ENCODE measurements at regions of chr7 and their contacts with region 1.

Region 1: GRCh38 chr7:82210416-82211184 is 233.0 kb downstream of the CACNA2D1 start:
- DNase-seq: no peak
- ATAC-seq: no peak
- H3K4me3 ChIP-seq: no peak overlapping the region
- H3K27ac ChIP-seq: no peak overlapping the region
- H3K4me1 ChIP-seq: no peaks in the 10 kb centered on the region
- H3K27me3 ChIP-seq: no peaks in the 10 kb centered on the region
- CTCF ChIP-seq: no peak
- EP300 ChIP-seq: no peak
- POLR2A ChIP-seq: no peak
- RAD21 ChIP-seq: no peak

Region 2: GRCh38 chr7:82194016-82194643 is 16.5 kb before region 1 on chr7:
- CTCF ChIA-PET with region 1: no interaction called
- POLR2A ChIA-PET with region 1: no interaction called
- in situ Hi-C with region 1: no loop called
- intact Hi-C with region 1: no loop called
- DNase-seq: no peak
- ATAC-seq: no peak
- H3K4me3 ChIP-seq: no peak overlapping the region
- H3K27ac ChIP-seq: no peak overlapping the region
- H3K4me1 ChIP-seq: no peaks in the 10 kb centered on the region
- H3K27me3 ChIP-seq: no peaks in the 10 kb centered on the region
- CTCF ChIP-seq: no peak
- EP300 ChIP-seq: no peak
- POLR2A ChIP-seq: no peak
- RAD21 ChIP-seq: no peak

Region 3: DNA sequence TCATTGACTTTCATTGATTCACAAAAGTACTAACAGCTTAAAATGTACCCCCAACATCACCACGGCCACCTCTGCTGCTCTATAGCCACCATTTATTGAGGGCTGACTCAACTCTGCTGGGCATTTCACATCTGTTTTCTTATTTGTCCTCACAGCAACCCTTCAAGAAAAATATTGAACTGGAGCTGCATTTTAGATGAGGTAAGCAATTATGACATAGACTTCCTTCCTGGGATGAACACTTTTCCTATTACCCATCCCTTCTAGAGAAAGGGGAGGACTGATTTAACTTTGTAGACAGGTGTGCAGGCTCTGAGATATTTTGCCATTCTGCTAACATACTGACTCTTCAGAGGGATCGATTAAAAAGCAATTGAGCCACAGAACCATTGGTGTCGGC is 15.6 kb after region 1 on chr7:
- CTCF ChIA-PET with region 1: no interaction called
- POLR2A ChIA-PET with region 1: no interaction called
- in situ Hi-C with region 1: no loop called
- intact Hi-C with region 1: no loop called
- DNase-seq: no peak
- ATAC-seq: no peak
- H3K4me3 ChIP-seq: no peak overlapping the region
- H3K27ac ChIP-seq: no peak overlapping the region
- H3K4me1 ChIP-seq: no peaks in the 10 kb centered on the region
- H3K27me3 ChIP-seq: no peaks in the 10 kb centered on the region
- CTCF ChIP-seq: no peak
- EP300 ChIP-seq: no peak
- POLR2A ChIP-seq: no peak
- RAD21 ChIP-seq: no peak

Region 4: DNA sequence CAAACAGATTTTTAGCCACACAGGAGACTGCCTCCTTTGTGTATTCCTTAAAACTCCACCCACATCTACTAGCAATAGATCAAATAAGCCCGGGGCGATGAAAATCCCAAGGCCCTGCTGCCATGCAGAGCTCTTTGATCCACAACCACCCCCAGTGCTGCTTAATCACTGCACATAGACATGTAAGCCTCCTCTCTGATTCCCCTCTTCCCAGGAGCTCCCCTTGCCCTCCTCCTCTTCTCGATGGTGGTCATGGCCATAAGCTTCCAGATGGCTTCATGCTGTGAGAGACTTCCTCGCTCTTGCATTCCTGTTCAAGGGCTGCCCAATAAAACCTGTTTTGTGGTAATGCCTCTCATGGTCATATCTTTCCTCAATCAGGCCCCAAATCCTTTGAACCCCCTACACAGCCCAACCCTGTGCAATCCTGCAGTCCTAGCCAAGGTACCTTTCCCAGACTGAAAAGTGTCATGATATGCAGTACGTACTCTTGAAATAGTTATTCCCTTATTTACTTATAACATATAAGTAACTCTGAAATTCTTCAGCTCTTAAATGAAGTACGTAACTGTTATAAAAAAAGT is 74.4 kb after region 1 on chr7:
- CTCF ChIA-PET with region 1: no interaction called
- POLR2A ChIA-PET with region 1: no interaction called
- in situ Hi-C with region 1: no loop called
- intact Hi-C with region 1: loop called (anchors 5 kb)
- DNase-seq: no peak
- ATAC-seq: no peak
- H3K4me3 ChIP-seq: no peak overlapping the region
- H3K27ac ChIP-seq: no peak overlapping the region
- H3K4me1 ChIP-seq: no peaks in the 10 kb centered on the region
- H3K27me3 ChIP-seq: no peaks in the 10 kb centered on the region
- CTCF ChIP-seq: no peak
- EP300 ChIP-seq: no peak
- POLR2A ChIP-seq: no peak
- RAD21 ChIP-seq: no peak